ENCODE measurements at regions of chr7 and their contacts with region 1.

Region 1: DNA sequence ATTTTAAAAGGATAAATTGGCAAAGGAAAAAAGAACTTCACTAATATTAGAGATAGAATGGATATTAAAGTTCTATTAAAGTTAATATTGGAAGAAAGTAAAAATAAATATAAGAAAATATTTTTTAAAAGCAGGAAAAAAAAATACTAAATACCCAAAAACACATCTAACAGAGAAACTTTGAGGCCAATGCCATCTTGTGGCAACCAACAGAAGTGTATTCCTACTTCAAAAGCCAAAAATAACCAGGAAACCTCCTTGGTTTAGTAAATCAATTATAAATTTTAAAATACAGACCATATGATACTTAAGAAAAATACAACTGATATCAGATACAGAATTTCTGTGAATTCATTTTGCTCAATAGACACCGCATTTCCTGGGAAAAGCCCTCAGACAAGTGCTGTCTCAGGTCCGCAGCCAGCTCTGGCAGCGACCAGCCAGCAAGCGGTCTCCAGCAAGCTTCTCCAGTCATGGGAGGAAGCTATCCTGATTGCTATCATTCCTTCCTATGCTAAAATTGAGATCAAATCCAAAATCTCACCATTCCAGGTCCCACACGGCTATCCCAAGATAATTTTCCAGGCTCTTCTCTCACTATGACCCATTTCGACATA is 65.3 kb downstream of the LMBR1 start:
- DNase-seq: no peak
- H3K4me3 ChIP-seq: no peak overlapping the region
- H3K4me3 Mint-ChIP-seq: no peak overlapping the region
- H3K27ac Mint-ChIP-seq: no peak overlapping the region
- H3K4me1 ChIP-seq: no peaks in the 10 kb centered on the region
- H3K4me1 Mint-ChIP-seq: no peaks in the 10 kb centered on the region
- H3K27me3 ChIP-seq: no peaks in the 10 kb centered on the region
- H3K27me3 Mint-ChIP-seq: no peaks in the 10 kb centered on the region
- CTCF ChIP-seq: peak; percentile 55 to 71

Region 2: DNA sequence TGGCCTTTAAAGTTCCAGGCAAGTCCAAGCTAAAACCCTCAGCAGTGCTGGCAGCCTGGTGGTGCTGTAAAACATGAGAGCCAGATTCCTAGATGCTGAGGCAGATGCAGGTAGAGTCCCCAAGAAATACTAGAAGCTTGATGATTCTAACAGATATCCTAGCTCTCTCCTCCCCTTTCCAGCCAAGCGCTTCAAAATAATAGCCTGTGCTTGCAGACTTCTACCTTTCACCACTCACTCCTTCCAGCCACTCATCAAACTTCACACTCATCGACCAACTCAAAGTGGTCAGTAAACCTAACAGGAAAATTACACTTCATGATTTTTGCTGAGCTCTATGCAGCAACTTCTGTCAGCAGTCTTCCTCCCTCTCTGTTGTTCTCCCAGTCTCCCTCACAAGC is 15.0 kb after region 1 on chr7:
- CTCF ChIA-PET with region 1: no interaction called
- POLR2A ChIA-PET with region 1: interaction called, 11 read pairs
- intact Hi-C with region 1: no loop called
- DNase-seq: no peak
- H3K4me3 ChIP-seq: no peak overlapping the region
- H3K4me3 Mint-ChIP-seq: no peak overlapping the region
- H3K27ac Mint-ChIP-seq: no peak overlapping the region
- H3K4me1 ChIP-seq: no peaks in the 10 kb centered on the region; the same call in 1 of the 2 replicates
- H3K4me1 Mint-ChIP-seq: peaks cover 13% of the 10 kb centered on the region
- H3K27me3 ChIP-seq: no peaks in the 10 kb centered on the region
- H3K27me3 Mint-ChIP-seq: no peaks in the 10 kb centered on the region
- CTCF ChIP-seq: no peak

Region 3: GRCh38 chr7:157125376-157126223 is 297.9 kb after region 1 on chr7:
- CTCF ChIA-PET with region 1: no interaction called
- POLR2A ChIA-PET with region 1: no interaction called
- intact Hi-C with region 1: no loop called
- DNase-seq: no peak
- H3K4me3 ChIP-seq: no peak overlapping the region
- H3K4me3 Mint-ChIP-seq: no peak overlapping the region
- H3K27ac Mint-ChIP-seq: no peak overlapping the region
- H3K4me1 ChIP-seq: no peaks in the 10 kb centered on the region; the same call in none of the 2 replicates
- H3K4me1 Mint-ChIP-seq: peaks cover 6% of the 10 kb centered on the region
- H3K27me3 ChIP-seq: no peaks in the 10 kb centered on the region
- H3K27me3 Mint-ChIP-seq: peaks cover 4% of the 10 kb centered on the region
- CTCF ChIP-seq: no peak

Measured in Caco-2 (cell line).